Mammary epithelial cell (primary cell): ENCODE measurements at regions of chr15 and their contacts with region 1.

Region 1: DNA sequence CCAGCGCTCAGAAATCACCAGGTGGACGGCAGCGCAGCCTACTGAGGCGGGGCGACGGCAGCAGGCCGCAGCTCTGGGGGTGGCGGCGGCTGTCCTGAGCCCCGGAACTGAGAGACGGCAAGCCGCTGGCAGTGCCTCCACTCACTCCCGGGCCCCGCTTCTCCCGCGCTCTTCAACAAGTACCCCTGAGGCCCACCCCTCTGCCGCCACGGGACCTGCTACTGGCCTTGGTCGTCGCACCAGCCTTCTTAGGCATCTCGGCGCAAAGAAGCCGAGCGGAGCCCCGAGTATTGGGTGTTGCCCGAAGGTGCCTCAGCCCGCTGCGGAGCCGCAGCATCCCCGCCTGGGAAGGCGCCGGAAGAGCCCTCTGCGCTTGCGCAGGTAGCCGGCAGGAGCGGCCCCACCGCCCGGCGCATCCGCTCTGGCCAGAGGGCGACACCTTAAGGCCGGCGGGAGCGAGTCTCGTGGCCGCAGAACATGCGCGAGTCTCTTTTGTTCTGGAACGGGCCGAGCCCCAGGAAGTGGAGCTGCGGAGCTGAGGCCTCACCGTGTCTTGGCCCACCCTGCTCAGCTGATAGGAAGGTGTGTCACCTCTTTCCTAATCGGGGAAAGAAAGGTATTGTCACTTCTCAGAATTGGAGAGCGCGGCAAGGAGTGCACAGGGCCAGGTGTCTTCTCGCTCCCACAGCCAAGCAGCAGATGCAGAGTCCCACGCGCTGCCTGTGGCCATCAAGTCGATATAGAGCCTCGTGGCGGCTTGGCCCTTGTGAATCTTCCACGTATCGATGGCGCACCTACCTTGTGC is at the start of gene C15orf40:
- DNase-seq: peak; percentile 92
- H3K4me3 ChIP-seq: peak within 1 kb of the TSS; percentile 80 to 97 (median 96)
- H3K27ac ChIP-seq: peak within 1 kb of the TSS; percentile 61
- H3K4me1 ChIP-seq: peaks cover 20% of the 10 kb centered on the region
- H3K27me3 ChIP-seq: no peaks in the 10 kb centered on the region
- CTCF ChIP-seq: peak; percentile 31 to 75
- total RNA-seq, gene C15orf40: 14.7 to 28.6 TPM

Region 2: GRCh38 chr15:82540055-82540983 is 471.2 kb before region 1 on chr15 and contains the start of gene RPS17:
- CTCF ChIA-PET with region 1: no interaction called
- dilution Hi-C with region 1: no loop called
- in situ Hi-C with region 1: loop called (anchors 10 kb)
- intact Hi-C with region 1: loop called (anchors 5 kb)
- DNase-seq: peak; percentile 96
- H3K4me3 ChIP-seq: peak within 1 kb of the TSS; percentile 83 to 92 (median 92)
- H3K27ac ChIP-seq: peak within 1 kb of the TSS; percentile 73
- H3K4me1 ChIP-seq: peaks cover 21% of the 10 kb centered on the region
- H3K27me3 ChIP-seq: no peaks in the 10 kb centered on the region
- CTCF ChIP-seq: peak; percentile 78 to 98
- total RNA-seq, gene RPS17: 1,069 to 1,616 TPM

Region 3: GRCh38 chr15:83207622-83208411 is 196.3 kb after region 1 on chr15 and contains the start of gene HDGFL3:
- CTCF ChIA-PET with region 1: no interaction called
- dilution Hi-C with region 1: no loop called
- in situ Hi-C with region 1: no loop called
- intact Hi-C with region 1: loop called (anchors 1 kb)
- DNase-seq: peak; percentile 57
- H3K4me3 ChIP-seq: peak within 1 kb of the TSS; percentile 84 to 88 (median 85)
- H3K27ac ChIP-seq: peak within 1 kb of the TSS; percentile 61
- H3K4me1 ChIP-seq: peaks cover 26% of the 10 kb centered on the region
- H3K27me3 ChIP-seq: no peaks in the 10 kb centered on the region
- CTCF ChIP-seq: peak in 1 of 2 donors; percentile 27
- total RNA-seq, gene HDGFL3: 22.7 to 79.2 TPM

Region 4: DNA sequence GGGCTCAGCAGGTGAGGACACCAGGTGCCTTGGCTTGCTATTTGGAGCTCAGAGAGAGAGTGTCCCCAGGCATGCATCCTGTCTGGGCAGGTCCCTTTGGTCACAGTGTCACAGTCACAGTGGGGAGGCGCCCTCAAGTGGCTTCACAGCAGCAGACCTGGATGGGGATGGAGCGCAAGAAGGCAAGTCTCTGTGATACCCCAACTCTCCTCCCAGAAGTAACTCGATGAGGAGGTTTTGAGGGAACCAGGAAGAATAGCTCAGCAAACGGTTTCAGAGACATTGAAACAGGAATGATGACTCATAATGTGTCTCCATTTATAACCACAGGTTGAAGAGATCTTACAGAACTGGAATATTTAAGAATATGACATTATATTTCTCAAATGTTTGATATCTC is 369.2 kb after region 1 on chr15:
- CTCF ChIA-PET with region 1: no interaction called
- dilution Hi-C with region 1: no loop called
- in situ Hi-C with region 1: no loop called
- intact Hi-C with region 1: loop called (anchors 1 kb)
- DNase-seq: peak; percentile 84
- H3K4me3 ChIP-seq: no peak overlapping the region
- H3K27ac ChIP-seq: peak overlapping the region; percentile 97
- H3K4me1 ChIP-seq: peaks cover 45% of the 10 kb centered on the region
- H3K27me3 ChIP-seq: no peaks in the 10 kb centered on the region
- CTCF ChIP-seq: peak; percentile 43 to 75

Region 5: GRCh38 chr15:83559310-83559966 is 548.0 kb after region 1 on chr15:
- CTCF ChIA-PET with region 1: no interaction called
- dilution Hi-C with region 1: no loop called
- in situ Hi-C with region 1: no loop called
- intact Hi-C with region 1: loop called (anchors 2 kb)
- DNase-seq: peak; percentile 71
- H3K4me3 ChIP-seq: no peak overlapping the region
- H3K27ac ChIP-seq: no peak overlapping the region
- H3K4me1 ChIP-seq: peaks cover 6% of the 10 kb centered on the region
- H3K27me3 ChIP-seq: no peaks in the 10 kb centered on the region
- CTCF ChIP-seq: peak; percentile 86 to 89